Dendritic cell treated with granulocyte-macrophage colony-stimulating factor and Interleukin-4, amounts not matched to agents 40 ng/mL and 50 ng/mL, for 4 days (primary cell): ENCODE measurements at regions of chr7 and their contacts with region 1.

Region 1: DNA sequence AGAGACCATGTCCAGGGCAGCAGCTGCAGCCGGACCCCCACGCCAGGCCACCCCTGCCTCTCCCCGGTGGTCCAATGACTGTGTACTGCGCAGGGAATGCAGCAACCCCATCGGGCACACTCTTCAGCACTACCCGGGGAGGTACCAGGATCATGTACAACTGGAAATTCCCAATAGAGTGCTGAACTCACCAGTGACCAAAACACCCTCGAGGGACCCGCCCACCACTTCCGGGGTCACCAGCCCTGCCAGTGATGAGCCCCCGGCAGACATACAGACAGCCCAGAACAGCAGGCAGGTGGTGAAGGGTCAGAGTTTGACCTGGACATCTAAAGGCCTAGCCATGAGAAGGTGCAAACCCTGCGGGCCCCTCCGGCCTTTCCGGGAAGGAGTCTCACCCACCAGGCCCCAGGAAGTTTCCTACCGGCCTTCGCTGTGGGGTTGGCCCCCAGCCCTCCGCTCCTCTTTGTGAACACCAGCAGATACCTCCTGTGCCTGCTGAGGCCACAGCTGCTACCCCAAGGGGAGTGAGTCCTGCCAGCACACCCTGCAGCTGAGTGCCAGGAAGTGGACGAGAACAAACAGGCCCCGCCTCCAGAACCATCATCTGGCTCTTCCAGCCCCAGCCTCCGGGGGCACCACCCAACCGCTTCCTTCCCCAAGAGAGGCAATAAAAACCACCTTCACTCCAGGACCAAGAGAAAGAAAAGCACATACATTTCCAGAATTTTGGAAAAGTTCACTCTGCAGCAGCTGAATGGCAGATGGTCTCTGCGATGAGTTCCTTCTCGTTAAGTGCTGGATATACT is 5.0 kb upstream of the ANKRD61 start:
- H3K4me3 Mint-ChIP-seq: peak overlapping the region; percentile 77
- H3K27ac Mint-ChIP-seq: peak overlapping the region; percentile 98
- H3K4me1 Mint-ChIP-seq: peaks cover 82% of the 10 kb centered on the region
- H3K27me3 Mint-ChIP-seq: no peaks in the 10 kb centered on the region

Region 2: DNA sequence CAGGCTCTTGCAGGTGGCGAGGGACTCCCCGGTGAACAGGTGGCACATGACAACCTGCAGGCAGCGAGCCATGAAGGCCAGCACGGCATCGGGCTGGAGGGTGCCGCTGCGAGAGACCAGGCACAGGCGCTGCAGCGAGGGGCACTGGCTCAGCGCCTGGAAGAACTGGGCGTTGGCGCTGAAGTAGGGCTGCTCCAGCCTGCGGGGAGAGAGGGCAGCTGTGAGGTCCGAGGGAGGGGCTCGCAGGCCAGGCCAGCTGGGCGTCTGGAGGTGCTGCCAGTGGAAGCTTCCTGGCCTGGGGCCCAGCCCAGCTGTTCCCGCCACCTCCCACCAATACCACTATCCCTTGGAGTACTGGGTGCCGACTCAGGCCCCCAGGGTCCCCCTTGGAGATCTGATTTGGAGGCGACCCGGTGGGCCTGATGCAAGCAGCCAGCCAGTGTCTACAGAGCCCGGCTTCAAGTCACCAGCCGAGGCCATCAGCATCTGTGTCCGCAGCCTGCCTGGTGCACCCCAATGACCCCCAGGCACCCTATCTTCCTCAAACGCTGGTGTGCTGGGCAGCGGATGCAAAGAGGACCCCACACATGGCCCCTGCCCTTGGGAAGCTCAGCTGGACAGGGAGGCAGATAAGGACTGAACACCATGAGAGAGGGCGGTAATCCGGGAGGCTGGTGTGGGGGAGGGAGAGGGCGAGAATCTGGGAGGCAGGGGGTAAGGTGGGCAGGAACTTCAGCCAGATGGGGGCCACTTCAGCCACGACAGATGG is 534.8 kb before region 1 on chr7:
- intact Hi-C with region 1: no loop called
- H3K4me3 Mint-ChIP-seq: no peak overlapping the region
- H3K27ac Mint-ChIP-seq: peak overlapping the region; percentile 71
- H3K4me1 Mint-ChIP-seq: peaks cover 51% of the 10 kb centered on the region
- H3K27me3 Mint-ChIP-seq: peaks cover 4% of the 10 kb centered on the region

Region 3: GRCh38 chr7:6008668-6009611 is 17.3 kb before region 1 on chr7 and contains the starts of genes AIMP2 and PMS2:
- intact Hi-C with region 1: loop called (anchors 1 kb)
- H3K4me3 Mint-ChIP-seq: peak within 1 kb of the TSS; percentile 84
- H3K27ac Mint-ChIP-seq: peak within 1 kb of the TSS; percentile 93
- H3K4me1 Mint-ChIP-seq: peaks cover 37% of the 10 kb centered on the region
- H3K27me3 Mint-ChIP-seq: no peaks in the 10 kb centered on the region

Region 4: GRCh38 chr7:6530626-6531491 is 504.6 kb after region 1 on chr7:
- intact Hi-C with region 1: no loop called
- H3K4me3 Mint-ChIP-seq: peak overlapping the region; percentile 44
- H3K27ac Mint-ChIP-seq: no peak overlapping the region
- H3K4me1 Mint-ChIP-seq: peaks cover 27% of the 10 kb centered on the region
- H3K27me3 Mint-ChIP-seq: peaks cover 87% of the 10 kb centered on the region